Breast epithelium (tissue), 4 donors: ENCODE measurements at regions of chr12 and their contacts with region 1.

Region 1: GRCh38 chr12:41576925-41577324 is 388.8 kb downstream of the PDZRN4 start:
- DNase-seq: no peak
- H3K4me3 ChIP-seq: no peak overlapping the region
- H3K27ac ChIP-seq: no peak overlapping the region
- H3K4me1 ChIP-seq: no peaks in the 10 kb centered on the region
- H3K27me3 ChIP-seq: no peaks in the 10 kb centered on the region
- CTCF ChIP-seq: no peak
- POLR2A ChIP-seq: no peak

Region 2: DNA sequence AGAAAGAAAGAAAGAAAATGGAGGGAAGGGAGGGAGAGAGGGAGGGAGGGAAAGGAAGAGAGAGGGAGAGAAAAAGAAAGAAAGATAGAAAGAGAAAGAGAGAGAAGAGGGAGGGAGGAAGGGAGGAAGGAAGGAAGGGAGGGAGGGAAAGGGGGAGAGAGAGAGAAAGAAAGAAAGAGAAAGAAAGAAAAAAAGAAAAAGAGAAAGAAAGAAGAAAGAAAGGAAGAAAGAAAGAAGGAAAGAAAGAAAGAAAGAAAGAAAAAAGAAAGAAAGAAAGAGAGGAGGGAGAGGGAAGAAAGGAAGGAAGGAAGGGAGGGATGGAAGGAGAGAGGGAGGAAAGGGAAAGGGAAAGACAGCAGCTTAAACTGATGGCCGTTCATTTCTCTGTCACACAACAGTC is 68.7 kb after region 1 on chr12:
- intact Hi-C with region 1: loop called (anchors 10 kb)
- DNase-seq: no peak
- H3K4me3 ChIP-seq: no peak overlapping the region
- H3K27ac ChIP-seq: no peak overlapping the region
- H3K4me1 ChIP-seq: no peaks in the 10 kb centered on the region
- H3K27me3 ChIP-seq: no peaks in the 10 kb centered on the region
- CTCF ChIP-seq: no peak
- POLR2A ChIP-seq: no peak